ENCODE measurements at regions of chr2 and their contacts with region 1.

Region 1: DNA sequence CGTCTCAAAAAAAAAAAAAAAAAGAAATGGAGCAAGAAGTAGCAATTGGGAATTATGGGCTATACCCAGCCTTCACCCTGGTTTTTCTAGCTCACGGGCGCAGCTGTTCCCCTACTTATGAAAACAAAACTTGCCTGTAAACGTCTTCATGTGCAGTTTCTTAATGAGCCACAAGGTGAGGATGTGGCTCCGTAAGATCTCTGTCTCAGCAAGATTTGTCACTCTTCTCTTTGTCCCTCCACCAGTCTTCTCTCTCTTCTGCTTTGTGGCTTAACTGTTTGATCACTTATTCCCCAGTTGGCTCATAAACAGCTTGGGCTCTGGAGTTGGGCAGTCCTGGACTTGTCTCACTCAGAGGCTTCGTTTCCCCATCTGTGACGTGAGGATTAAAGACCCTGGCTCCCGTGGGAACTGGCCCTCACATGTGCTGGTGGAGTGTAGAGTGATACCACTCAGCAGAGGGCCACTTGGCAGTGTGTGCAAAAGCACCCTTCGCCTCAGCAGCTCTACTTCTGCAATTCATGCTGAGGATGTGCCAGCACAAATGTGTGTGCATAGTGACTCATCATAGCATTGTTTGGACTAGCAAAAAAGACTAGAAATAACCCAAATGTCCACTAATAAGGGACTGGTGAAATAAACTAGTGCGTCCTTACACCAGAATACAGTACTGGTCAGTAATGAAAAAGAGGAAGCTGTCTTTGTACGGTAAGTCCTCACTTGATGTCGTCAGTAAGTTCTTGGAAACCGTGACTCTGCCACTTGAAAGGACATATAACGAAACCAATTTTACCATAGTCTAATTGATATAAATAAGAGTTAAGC is 8.7 kb downstream of the CEP68 start:
- DNase-seq: peak in 4 of 6 donors; percentile 57 to 65 (median 60)
- ATAC-seq: peak; percentile 49 to 77 (median 63)
- H3K4me3 ChIP-seq: no peak overlapping the region
- H3K27ac ChIP-seq: peak overlapping the region in 3 of 4 donors; percentile 19 to 71 (median 67)
- H3K4me1 ChIP-seq: peaks cover 25 to 32% (median 26%) of the 10 kb centered on the region in 3 donors
- H3K27me3 ChIP-seq: no peaks in the 10 kb centered on the region
- CTCF ChIP-seq: peak in 2 of 4 donors; percentile 8 to 43

Region 2: DNA sequence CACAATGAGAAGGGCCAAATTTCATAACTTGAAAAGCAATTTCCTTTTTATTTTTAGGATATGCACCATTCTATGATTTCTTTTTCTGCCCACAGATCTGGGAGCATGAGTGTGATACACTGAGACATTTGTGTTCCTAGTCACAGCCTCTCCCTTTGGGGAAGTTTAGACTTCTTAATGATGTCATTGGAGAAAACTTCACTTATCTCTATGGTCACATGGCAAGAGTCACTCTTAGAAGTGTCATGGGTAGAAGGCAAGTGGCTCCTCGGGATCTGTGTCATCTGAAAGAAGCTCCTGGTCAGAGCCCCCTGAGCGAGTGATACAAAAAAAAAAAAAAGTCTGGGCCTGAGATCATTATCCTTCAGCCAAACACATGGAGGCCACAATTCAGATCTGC is 673.5 kb before region 1 on chr2:
- intact Hi-C with region 1: no loop called
- DNase-seq: no peak
- ATAC-seq: peak in 1 of 4 donors; percentile 75
- H3K4me3 ChIP-seq: no peak overlapping the region
- H3K27ac ChIP-seq: no peak overlapping the region
- H3K4me1 ChIP-seq: no peaks in the 10 kb centered on the region
- H3K27me3 ChIP-seq: no peaks in the 10 kb centered on the region
- CTCF ChIP-seq: no peak

Region 3: DNA sequence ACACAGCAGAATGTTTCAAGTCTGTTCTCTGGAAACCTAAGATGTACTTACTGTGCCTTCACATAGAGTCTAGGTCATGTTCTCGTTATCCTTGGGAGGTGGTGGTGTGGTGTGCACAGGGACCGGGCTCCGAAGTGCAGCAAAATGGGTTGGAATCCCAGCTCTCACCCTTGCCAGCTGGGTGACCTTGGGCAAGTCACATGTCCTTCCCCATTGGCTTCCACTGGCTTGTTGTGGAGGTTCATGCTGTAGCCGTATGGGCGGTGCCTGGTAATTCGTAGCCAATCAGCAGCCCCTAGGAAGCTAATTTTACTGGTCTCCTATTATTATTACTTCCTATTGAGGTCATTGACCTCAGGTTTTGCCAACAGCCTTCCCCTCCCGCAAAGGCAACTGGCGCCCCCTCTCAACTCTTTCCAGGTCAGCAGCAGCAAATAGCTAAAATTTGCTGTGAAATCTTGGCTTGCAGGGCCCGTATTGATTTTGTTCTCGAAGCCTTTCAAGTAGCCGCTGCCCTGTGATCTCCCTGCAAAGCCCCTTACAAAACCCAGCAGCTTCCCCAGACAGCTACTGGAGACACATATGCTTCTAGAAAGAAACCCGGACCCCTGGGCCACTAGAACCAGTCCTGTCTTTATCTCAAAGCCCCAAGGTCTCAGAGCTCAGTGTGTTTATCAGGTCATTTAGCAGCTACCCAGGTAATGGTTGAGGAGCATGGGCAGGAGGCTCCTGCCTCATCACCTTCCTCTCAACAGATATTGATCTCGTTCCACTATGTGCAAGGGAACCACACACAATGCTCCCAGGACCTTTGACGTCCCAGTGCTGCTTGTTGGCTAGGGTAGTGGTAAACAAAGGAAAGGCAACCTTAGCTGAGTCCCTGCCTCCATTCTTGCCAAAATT is 142.2 kb before region 1 on chr2:
- intact Hi-C with region 1: no loop called
- DNase-seq: peak in 4 of 6 donors; percentile 41 to 57 (median 47)
- ATAC-seq: peak; percentile 30 to 80 (median 52)
- H3K4me3 ChIP-seq: no peak overlapping the region
- H3K27ac ChIP-seq: peak overlapping the region in 1 of 4 donors; percentile 16
- H3K4me1 ChIP-seq: peaks cover 0 to 9% (median 8%) of the 10 kb centered on the region in 3 donors
- H3K27me3 ChIP-seq: no peaks in the 10 kb centered on the region
- CTCF ChIP-seq: no peak

Region 4: DNA sequence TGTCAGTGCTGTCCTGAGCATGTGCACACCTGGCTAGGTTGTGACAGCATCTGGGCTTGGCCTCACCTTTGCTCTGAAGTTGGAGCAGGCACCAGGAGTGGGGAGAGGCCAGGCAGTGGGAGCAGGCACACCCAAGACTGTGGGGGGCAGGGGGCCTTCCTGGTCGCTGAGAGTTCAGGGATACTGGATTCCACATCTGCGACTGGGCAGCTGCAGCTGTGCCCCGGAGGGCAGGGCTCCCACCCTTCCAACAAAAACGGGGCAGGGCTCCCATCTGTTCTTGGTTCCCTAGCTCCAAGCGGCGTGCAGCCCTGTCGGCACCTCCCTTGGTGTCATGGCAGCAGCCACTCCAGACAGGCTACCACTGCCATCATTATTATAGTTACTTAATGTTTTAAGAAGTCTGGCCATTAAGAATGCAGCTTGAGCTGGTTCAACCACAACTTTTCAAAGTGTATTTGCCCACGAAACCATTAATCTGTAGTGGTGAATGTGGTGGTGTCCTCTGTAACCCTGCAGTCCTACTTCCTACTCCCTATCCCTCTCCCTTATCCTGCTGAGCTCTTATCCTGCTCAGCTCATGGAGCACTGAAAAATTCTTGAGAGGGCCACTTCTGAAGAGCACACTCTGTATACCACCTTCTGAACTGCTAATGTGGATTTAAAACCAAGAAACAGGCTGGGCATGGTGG is 113.0 kb after region 1 on chr2:
- intact Hi-C with region 1: loop called in 1 of 3 experiments (anchors 10 kb)
- DNase-seq: no peak
- ATAC-seq: peak in 1 of 4 donors; percentile 21
- H3K4me3 ChIP-seq: no peak overlapping the region
- H3K27ac ChIP-seq: no peak overlapping the region
- H3K4me1 ChIP-seq: no peaks in the 10 kb centered on the region
- H3K27me3 ChIP-seq: no peaks in the 10 kb centered on the region
- CTCF ChIP-seq: no peak

Measured in pancreas (tissue), 10 donors.